Panc1 (cell line): ENCODE measurements at regions of chr17 and their contacts with region 1.

Region 1: GRCh38 chr17:35596530-35597233 is 9.6 kb downstream of the AP2B1 start:
- DNase-seq: no peak
- ATAC-seq: peak; percentile 37; the same call in 1 of the 2 replicates
- H3K4me3 ChIP-seq: no peak overlapping the region
- H3K27ac ChIP-seq: no peak overlapping the region
- H3K4me1 ChIP-seq: peaks cover 16% of the 10 kb centered on the region
- H3K27me3 ChIP-seq: no peaks in the 10 kb centered on the region
- CTCF ChIP-seq: no peak; the same call in 1 of the 2 replicates

Region 2: DNA sequence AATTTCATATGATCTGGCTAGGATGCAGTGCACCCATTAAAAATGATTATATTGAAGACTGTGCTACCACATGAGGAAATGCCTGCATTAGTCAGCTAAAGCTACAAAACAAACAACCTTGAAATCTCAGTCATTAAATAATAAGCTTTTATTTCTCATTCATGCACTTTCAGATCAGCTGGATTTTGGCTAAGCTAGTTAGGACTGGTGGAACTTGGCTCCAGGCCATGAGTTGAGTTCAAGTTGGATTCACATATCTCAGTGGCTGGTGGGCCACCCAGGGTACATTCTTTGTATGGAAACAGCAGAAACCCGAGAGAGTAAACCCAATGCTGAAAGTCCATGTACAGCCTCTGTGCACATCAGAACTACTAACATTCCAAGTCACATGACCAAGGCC is 52.8 kb before region 1 on chr17:
- CTCF ChIA-PET with region 1: no interaction called
- POLR2A ChIA-PET with region 1: no interaction called
- in situ Hi-C with region 1: no loop called
- intact Hi-C with region 1: no loop called
- DNase-seq: no peak
- ATAC-seq: no peak
- H3K4me3 ChIP-seq: no peak overlapping the region
- H3K27ac ChIP-seq: no peak overlapping the region
- H3K4me1 ChIP-seq: no peaks in the 10 kb centered on the region
- H3K27me3 ChIP-seq: peaks cover 4% of the 10 kb centered on the region; the same call in 1 of the 2 replicates
- CTCF ChIP-seq: no peak

Region 3: GRCh38 chr17:35653619-35654361 is 57.1 kb after region 1 on chr17:
- CTCF ChIA-PET with region 1: no interaction called
- POLR2A ChIA-PET with region 1: no interaction called
- in situ Hi-C with region 1: no loop called
- intact Hi-C with region 1: loop called (anchors 10 kb)
- DNase-seq: no peak
- ATAC-seq: no peak
- H3K4me3 ChIP-seq: no peak overlapping the region
- H3K27ac ChIP-seq: no peak overlapping the region
- H3K4me1 ChIP-seq: no peaks in the 10 kb centered on the region
- H3K27me3 ChIP-seq: no peaks in the 10 kb centered on the region
- CTCF ChIP-seq: no peak

Region 4: GRCh38 chr17:35953720-35954119 is 357.0 kb after region 1 on chr17:
- CTCF ChIA-PET with region 1: no interaction called
- POLR2A ChIA-PET with region 1: no interaction called
- in situ Hi-C with region 1: no loop called
- intact Hi-C with region 1: no loop called
- DNase-seq: no peak
- ATAC-seq: no peak
- H3K4me3 ChIP-seq: no peak overlapping the region
- H3K27ac ChIP-seq: no peak overlapping the region
- H3K4me1 ChIP-seq: no peaks in the 10 kb centered on the region
- H3K27me3 ChIP-seq: no peaks in the 10 kb centered on the region
- CTCF ChIP-seq: no peak